Activated T-helper 2 cell treated with anti-CD3 and anti-CD28 coated beads, Interferon-gamma antibody, Interleukin-2, Interleukin-4, amounts not matched to agents 10 μg/mL and 5 μg/mL and 100 μg/mL, durations not matched to agents 14 hours and 24 hours and 36 hours (primary cell): ENCODE measurements at regions of chr1 and their contacts with region 1.

Region 1: DNA sequence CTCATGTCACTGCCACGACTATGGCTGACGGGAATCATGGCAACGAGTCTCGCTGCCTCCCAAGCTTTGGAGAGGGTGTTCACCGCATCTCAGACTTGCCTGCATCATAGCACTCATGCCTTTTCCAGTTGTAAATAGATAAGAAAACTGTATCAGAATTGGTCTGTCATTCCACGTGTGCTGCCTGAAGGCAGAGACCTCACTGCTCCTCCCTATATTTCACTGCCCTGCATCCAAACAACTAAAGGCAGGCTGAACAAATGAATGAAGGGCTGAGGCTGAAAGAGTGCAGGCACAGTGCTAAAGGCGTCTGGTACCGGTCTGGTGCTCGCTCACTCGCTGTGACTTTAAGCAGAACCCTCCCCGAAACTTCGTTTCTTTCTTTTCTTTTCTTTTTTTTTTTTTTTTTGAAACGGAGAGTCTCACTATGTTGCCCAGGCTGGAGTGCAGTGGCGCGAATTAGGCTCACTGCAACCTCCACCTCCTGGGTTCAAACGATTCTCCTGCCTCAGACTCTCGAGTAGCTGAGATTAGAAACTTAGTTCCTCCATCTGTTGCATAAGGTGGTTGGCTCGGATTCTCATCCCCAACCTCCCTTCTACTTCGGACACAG is 542 bp downstream of the EIF2B3 start:
- DNase-seq: no peak
- H3K4me3 Mint-ChIP-seq: peak overlapping the region; percentile 97
- H3K27ac Mint-ChIP-seq: peak overlapping the region; percentile 87
- H3K4me1 Mint-ChIP-seq: peaks cover 15% of the 10 kb centered on the region
- H3K27me3 Mint-ChIP-seq: no peaks in the 10 kb centered on the region

Region 2: DNA sequence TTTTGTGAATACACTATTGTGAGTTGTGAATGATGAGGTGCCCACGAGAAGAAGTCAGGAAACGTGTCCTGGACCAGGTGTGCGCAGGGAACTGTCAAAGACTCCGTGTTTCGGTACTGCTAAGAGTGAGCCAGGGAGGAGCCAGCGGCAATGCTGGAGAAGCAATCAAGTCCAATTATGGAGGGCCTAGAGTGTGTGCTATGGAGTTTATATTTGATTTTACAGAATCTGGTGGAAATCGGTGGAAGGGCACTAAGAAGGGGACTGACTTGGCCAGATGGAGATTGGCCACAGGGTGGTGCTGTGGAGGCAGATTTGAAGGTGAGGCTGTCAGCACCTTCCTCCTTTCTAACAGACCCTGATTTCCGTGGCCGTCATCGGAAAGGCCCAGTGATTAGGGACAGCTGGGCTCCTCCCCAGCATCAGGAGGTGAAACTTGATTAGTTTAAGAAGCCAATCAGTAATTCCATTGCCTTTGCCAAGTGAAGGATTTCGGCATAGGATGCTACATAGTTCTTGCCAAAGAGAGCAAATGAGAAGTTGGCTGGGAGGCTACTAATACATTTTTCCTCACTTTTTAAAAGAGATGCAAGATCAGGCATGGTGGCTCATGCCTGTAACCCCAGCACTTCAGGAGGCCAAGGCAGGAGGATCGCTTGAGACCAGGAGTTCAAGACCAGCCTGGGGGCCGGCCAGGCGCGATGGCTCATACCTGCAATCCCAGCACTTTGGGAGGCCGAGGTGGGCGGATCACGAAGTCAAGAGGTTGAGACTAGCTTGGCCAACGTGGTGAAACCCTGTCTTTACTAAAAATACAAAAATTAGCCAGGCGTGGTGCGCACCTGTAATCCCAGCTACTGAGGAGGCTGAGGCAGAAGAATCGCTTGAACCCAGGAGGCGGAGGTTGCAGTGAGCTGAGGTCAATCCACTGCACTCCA is 149.8 kb before region 1 on chr1:
- intact Hi-C with region 1: loop called (anchors 5 kb)
- DNase-seq: peak; percentile 75
- H3K4me3 Mint-ChIP-seq: no peak overlapping the region
- H3K27ac Mint-ChIP-seq: no peak overlapping the region
- H3K4me1 Mint-ChIP-seq: peaks cover 12% of the 10 kb centered on the region
- H3K27me3 Mint-ChIP-seq: no peaks in the 10 kb centered on the region

Region 3: DNA sequence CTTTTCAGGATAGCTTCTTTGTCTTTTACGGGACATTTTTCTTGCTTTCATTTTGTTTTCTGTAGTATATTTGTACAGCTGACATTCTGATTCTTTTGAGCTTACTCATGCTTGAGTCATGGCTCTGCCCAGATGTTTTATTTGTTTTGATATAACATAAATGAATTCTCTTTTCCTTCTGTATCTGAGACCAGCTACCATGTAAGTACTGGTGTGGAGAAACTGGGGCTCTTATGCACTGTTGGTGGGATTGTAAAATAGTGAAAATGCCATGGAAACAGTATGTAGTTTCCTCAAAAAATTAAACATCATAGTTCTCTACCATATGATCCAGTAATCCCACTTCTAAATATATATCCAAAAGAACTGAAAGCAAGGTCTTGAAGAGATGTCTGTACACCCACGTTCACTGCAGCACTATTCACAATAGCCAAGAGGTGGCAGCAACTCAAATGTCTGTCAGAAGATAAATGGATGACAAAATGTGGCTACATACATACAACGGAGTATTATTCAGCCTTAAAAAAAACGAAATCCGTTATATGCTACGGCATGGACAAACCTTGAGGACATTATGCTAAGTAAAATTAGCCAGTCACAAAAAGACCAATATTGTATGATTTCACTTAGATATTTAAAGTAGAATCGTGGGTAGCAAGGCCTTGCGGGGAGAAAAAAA is 60.9 kb before region 1 on chr1:
- intact Hi-C with region 1: no loop called
- DNase-seq: no peak
- H3K4me3 Mint-ChIP-seq: no peak overlapping the region
- H3K27ac Mint-ChIP-seq: no peak overlapping the region
- H3K4me1 Mint-ChIP-seq: peaks cover 6% of the 10 kb centered on the region
- H3K27me3 Mint-ChIP-seq: no peaks in the 10 kb centered on the region